ENCODE measurements at regions of chr6 and their contacts with region 1.

Region 1: GRCh38 chr6:2841264-2842138 is at the start of gene SERPINB1:
- DNase-seq: peak; percentile 98
- total RNA-seq, gene SERPINB1: 30.8 to 44.0 TPM

Region 2: GRCh38 chr6:2791124-2791974 is 50.2 kb before region 1 on chr6:
- intact Hi-C with region 1: loop called in 1 of 2 experiments (anchors 10 kb)
- DNase-seq: no peak

Region 3: DNA sequence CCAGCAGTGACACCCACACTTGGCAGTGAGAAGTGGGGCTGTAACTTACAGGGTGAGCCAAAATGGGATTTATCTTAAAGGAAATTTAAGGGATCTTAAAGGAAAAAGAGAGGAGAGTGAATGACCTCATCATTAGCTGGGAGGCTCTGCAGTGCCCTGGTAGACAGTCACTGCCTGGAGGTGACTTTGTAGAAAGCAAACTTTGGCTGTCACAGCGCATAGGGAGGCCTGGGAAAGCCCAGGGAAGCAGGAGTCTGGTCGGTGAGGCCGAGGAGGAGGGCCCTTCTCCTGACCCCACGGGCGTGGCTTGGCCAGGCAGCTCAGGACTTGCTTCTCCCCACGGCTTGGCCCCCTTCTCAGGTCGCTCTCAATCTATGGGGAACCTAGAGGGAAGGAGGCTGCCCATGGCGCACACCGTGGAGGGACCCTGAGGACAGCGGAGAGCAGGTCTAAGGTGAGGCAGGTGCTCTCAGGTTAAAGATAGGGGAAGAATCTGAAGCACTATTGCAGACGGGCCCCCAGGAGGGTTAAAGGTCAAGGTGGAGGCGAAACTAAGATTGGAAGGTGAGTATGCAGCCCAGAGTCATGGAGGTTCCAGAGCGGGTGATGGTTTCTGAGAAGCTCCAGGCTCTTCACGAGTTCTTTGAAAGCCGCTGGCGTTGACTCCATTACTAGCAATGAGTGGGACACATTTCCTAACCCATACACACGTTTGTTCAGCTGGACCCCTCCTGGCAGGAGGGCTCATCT is 211.2 kb after region 1 on chr6:
- intact Hi-C with region 1: loop called in 1 of 2 experiments (anchors 10 kb)
- DNase-seq: no peak

Measured in posterior vena cava (tissue), 2 donors.